CD4-positive, alpha-beta T cell (primary cell): ENCODE measurements at regions of chrX and their contacts with region 1.

Region 1: DNA sequence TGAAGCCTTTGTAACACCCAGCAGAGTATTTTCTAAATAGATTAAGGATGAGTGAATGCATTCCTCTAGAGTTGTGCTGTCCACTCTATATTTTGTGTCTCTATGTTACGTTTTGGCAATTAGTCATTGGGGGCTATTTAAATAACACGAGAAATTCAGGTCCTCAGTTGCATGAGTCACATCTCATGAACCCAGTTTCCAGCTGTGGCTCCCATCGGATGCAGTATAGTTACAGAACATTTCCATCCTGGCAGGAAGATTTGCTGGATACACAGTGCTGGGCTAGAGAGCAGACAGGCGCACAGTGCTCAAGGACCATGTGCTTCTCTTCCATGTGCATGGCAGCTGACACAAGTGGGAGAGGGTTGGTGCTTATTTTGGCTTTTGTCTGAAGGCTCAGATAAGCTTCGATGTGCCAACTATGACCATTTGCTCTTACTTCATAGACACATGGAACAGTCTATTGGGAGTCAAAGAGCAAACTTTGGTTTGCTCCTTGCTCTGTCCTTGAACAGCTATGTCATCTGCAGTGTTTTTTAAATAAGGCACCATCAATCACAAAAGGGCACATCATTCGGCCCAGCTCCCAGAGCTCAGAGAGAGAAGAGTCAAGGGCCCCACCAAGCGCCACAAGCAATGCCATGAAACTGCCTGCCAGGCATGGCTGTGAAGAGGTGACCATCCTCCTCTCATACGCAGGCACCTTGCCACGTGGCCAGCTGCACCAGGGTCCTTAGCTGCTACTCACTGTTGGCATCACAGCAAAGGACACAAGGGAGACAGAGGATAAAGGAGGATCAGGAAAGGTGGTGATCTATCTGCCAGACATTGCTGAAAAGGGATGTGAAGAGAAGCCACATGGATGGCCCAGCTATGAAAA is 8.1 kb upstream of the STS start:
- DNase-seq: no peak
- ATAC-seq: no peak
- H3K4me3 ChIP-seq: no peak overlapping the region
- H3K4me3 Mint-ChIP-seq: no peak overlapping the region
- H3K27ac ChIP-seq: no peak overlapping the region
- H3K27ac Mint-ChIP-seq: no peak overlapping the region
- H3K4me1 ChIP-seq: no peaks in the 10 kb centered on the region
- H3K4me1 Mint-ChIP-seq: peaks cover 34% of the 10 kb centered on the region
- H3K27me3 ChIP-seq: no peaks in the 10 kb centered on the region
- H3K27me3 Mint-ChIP-seq: no peaks in the 10 kb centered on the region
- CTCF ChIP-seq: no peak

Region 2: DNA sequence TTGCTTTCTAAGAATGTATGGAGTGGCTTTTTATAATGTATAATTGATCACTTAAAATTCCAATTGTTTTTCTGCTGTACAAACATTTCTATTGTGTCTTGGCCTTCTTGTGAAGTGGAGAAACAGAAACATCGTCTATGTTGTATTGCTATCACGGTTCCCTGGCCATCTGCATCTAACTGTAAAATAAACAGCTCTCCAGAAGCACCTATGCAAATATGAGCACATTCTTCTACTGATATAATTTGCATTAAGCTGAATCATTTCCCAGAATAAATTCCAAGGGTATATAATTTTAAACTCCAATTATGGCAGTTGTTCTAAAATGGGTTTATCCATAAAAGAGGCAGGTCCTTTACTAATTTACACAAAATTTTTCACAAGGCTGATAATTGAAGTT is 253.5 kb before region 1 on chrX:
- CTCF ChIA-PET with region 1: no interaction called
- POLR2A ChIA-PET with region 1: no interaction called
- intact Hi-C with region 1: no loop called
- DNase-seq: no peak
- ATAC-seq: no peak
- H3K4me3 ChIP-seq: no peak overlapping the region
- H3K4me3 Mint-ChIP-seq: no peak overlapping the region
- H3K27ac ChIP-seq: no peak overlapping the region
- H3K27ac Mint-ChIP-seq: no peak overlapping the region
- H3K4me1 ChIP-seq: no peaks in the 10 kb centered on the region
- H3K4me1 Mint-ChIP-seq: no peaks in the 10 kb centered on the region
- H3K27me3 ChIP-seq: no peaks in the 10 kb centered on the region
- H3K27me3 Mint-ChIP-seq: no peaks in the 10 kb centered on the region
- CTCF ChIP-seq: no peak

Region 3: GRCh38 chrX:7088968-7089615 is 50.4 kb before region 1 on chrX:
- CTCF ChIA-PET with region 1: no interaction called
- POLR2A ChIA-PET with region 1: no interaction called
- intact Hi-C with region 1: loop called in 1 of 2 experiments (anchors 5 kb)
- DNase-seq: peak; percentile 5 to 74 (median 40)
- ATAC-seq: peak; percentile 59
- H3K4me3 ChIP-seq: no peak overlapping the region
- H3K4me3 Mint-ChIP-seq: peak overlapping the region; percentile 16
- H3K27ac ChIP-seq: no peak overlapping the region
- H3K27ac Mint-ChIP-seq: peak overlapping the region; percentile 24
- H3K4me1 ChIP-seq: peaks cover 22% of the 10 kb centered on the region
- H3K4me1 Mint-ChIP-seq: peaks cover 47% of the 10 kb centered on the region
- H3K27me3 ChIP-seq: no peaks in the 10 kb centered on the region
- H3K27me3 Mint-ChIP-seq: no peaks in the 10 kb centered on the region
- CTCF ChIP-seq: peak; percentile 59